Ascending aorta (tissue), 2 donors: ENCODE measurements at regions of chr1 and their contacts with region 1.

Region 1: GRCh38 chr1:11143907-11144306 is 44.2 kb upstream of the EXOSC10 start:
- DNase-seq: no peak
- H3K4me3 ChIP-seq: no peak overlapping the region
- H3K27ac ChIP-seq: peak overlapping the region; percentile 65 to 79
- H3K4me1 ChIP-seq: peaks cover 0 to 9% of the 10 kb centered on the region in 2 donors
- H3K27me3 ChIP-seq: no peaks in the 10 kb centered on the region
- CTCF ChIP-seq: no peak

Region 2: GRCh38 chr1:11178021-11179015 is 34.4 kb after region 1 on chr1:
- intact Hi-C with region 1: loop called (anchors 5 kb)
- DNase-seq: no peak
- H3K4me3 ChIP-seq: no peak overlapping the region
- H3K27ac ChIP-seq: peak overlapping the region; percentile 51 to 54
- H3K4me1 ChIP-seq: peaks cover 11 to 37% of the 10 kb centered on the region in 2 donors
- H3K27me3 ChIP-seq: no peaks in the 10 kb centered on the region
- CTCF ChIP-seq: no peak